A549 (cell line): ENCODE measurements at regions of chr12 and their contacts with region 1.

Region 1: GRCh38 chr12:89352492-89353187 is at the start of gene DUSP6:
- DNase-seq: peak; percentile 98 to 99
- ATAC-seq: peak; percentile 80 to 87
- H3K4me3 ChIP-seq: peak within 1 kb of the TSS; percentile 70
- H3K27ac ChIP-seq: peak within 1 kb of the TSS; percentile 98 to 99
- H3K4me1 ChIP-seq: peaks cover 30% of the 10 kb centered on the region
- CTCF ChIP-seq: no peak
- EP300 ChIP-seq: peak in 1 of 2 experiments; percentile 39; a peak in 1 of 5 replicates
- POLR2A ChIP-seq: peak; percentile 37
- RAD21 ChIP-seq: peak in 1 of 2 experiments; percentile 17; a peak in 1 of 5 replicates
- polyA plus RNA-seq, gene DUSP6: 27.0 and 31.4 TPM in 2 replicates

Region 2: DNA sequence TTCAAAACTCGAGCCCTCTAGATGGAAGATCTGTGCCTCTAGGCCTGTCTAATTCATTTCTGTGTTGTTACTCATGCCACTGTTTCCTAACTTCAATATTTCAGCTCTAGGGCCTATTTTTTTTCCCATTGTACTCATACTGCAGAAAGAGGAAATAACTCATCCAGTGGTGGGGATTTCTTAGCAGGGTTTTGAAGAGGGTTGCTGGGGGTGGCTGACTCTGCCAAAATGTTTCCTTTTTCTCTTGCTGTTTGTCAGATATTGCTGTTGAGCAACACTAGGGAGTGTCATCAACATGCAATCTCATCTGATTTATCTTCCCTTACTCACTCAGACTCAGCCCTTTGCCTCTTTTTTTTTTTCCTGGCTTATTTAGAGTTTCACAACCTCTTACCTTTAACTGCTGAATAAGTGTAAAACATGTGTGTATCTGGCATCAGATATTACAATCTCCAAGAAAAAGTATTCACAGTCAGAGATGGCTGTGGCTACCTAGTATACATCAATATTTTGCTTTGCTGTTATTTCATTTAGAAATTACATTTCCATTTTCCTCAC is 189.9 kb before region 1 on chr12:
- CTCF ChIA-PET with region 1: no interaction called
- POLR2A ChIA-PET with region 1: interaction called, 42 read pairs
- DNase-seq: peak; percentile 31 to 91
- ATAC-seq: peak; percentile 93 to 99
- H3K4me3 ChIP-seq: no peak overlapping the region
- H3K27ac ChIP-seq: peak overlapping the region; percentile 36 to 82
- H3K4me1 ChIP-seq: peaks cover 45% of the 10 kb centered on the region
- CTCF ChIP-seq: no peak
- EP300 ChIP-seq: peak; percentile 89 to 91; a peak in 4 of 5 replicates
- POLR2A ChIP-seq: no peak
- RAD21 ChIP-seq: peak in 1 of 2 experiments; percentile 70; a peak in 3 of 5 replicates

Region 3: GRCh38 chr12:89179983-89180382 is 172.7 kb before region 1 on chr12:
- CTCF ChIA-PET with region 1: interaction called, 3 read pairs
- POLR2A ChIA-PET with region 1: interaction called, 13 read pairs
- DNase-seq: peak; percentile 31 to 82
- ATAC-seq: peak; percentile 47 to 56; a peak in 3 of 6 replicates
- H3K4me3 ChIP-seq: no peak overlapping the region
- H3K27ac ChIP-seq: no peak overlapping the region; a peak in 3 of 6 replicates
- H3K4me1 ChIP-seq: peaks cover 56% of the 10 kb centered on the region
- CTCF ChIP-seq: no peak
- EP300 ChIP-seq: peak; percentile 65 to 66; a peak in 3 of 5 replicates
- POLR2A ChIP-seq: no peak
- RAD21 ChIP-seq: peak in 1 of 2 experiments; percentile 35; a peak in 2 of 5 replicates

Region 4: DNA sequence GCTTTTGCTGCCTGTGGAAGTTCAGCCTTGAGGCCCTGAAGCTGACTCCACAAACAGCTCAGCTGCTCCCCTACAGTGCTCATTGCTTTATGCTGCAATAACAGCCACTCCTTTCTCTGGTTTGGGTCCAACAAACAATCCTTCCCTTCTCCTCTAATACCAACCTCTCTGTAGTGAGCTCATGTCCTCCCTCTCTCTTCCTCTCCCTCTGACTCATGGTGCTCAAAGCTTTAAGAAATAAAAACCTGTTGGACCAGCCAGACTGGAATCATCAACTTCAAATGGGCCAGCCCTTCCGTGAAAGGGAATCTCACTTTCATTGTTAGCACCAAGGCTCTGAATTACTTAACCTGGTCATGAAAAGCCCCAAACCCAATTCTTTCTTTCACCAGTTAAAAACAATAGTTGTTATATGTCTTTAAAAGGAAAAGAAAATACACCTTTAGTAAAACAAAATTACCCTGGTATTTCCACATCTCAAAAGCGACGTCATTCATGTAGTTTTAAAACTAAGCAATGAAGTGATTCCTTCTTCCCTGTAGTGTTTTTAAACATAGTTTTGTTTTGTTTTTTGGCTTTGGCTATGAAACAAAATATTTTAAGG is 126.7 kb before region 1 on chr12:
- CTCF ChIA-PET with region 1: no interaction called
- POLR2A ChIA-PET with region 1: interaction called, 12 read pairs
- DNase-seq: peak in 1 of 2 experiments; percentile 32
- ATAC-seq: peak; percentile 50 to 57; a peak in 4 of 6 replicates
- H3K4me3 ChIP-seq: no peak overlapping the region
- H3K27ac ChIP-seq: peak overlapping the region in 1 of 2 experiments; percentile 1; a peak in 1 of 6 replicates
- H3K4me1 ChIP-seq: peaks cover 9% of the 10 kb centered on the region; the same call in 1 of the 3 replicates
- CTCF ChIP-seq: no peak
- EP300 ChIP-seq: no peak
- POLR2A ChIP-seq: no peak
- RAD21 ChIP-seq: no peak

Region 5: GRCh38 chr12:89339526-89339925 is 13.1 kb before region 1 on chr12:
- CTCF ChIA-PET with region 1: no interaction called
- POLR2A ChIA-PET with region 1: interaction called, 11 read pairs
- DNase-seq: no peak
- ATAC-seq: no peak
- H3K4me3 ChIP-seq: no peak overlapping the region
- H3K27ac ChIP-seq: no peak overlapping the region
- H3K4me1 ChIP-seq: no peaks in the 10 kb centered on the region
- CTCF ChIP-seq: no peak
- EP300 ChIP-seq: no peak
- POLR2A ChIP-seq: no peak
- RAD21 ChIP-seq: no peak

Region 6: GRCh38 chr12:89733579-89734201 is 381.1 kb after region 1 on chr12:
- CTCF ChIA-PET with region 1: no interaction called
- POLR2A ChIA-PET with region 1: no interaction called
- DNase-seq: no peak
- ATAC-seq: no peak
- H3K4me3 ChIP-seq: no peak overlapping the region
- H3K27ac ChIP-seq: no peak overlapping the region
- H3K4me1 ChIP-seq: peaks cover 14% of the 10 kb centered on the region; the same call in 2 of the 3 replicates
- CTCF ChIP-seq: no peak
- EP300 ChIP-seq: no peak
- POLR2A ChIP-seq: no peak
- RAD21 ChIP-seq: no peak